G401 (cell line): ENCODE measurements at regions of chr16 and their contacts with region 1.

Region 1: GRCh38 chr16:15996432-15997109 is 47.2 kb downstream of the ABCC1 start:
- DNase-seq: no peak

Region 2: DNA sequence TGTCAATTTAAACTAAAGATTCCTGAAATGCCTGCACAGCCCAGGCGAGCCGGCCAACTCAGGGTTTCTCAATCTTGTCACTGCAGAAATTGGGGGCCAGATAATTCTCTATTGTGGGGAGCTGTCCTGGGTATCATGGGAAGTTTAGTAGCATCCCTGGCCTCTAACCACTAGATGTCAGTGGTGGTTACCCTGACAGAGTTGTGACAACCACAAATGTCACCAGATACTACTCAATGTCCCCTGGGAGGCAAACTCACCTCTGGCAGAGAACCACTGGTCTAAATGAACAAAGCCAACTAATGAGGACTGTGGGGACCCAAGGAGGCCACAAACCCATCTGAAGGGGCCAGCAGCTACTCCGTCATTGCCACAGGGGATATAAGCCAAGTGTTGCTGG is 230.7 kb before region 1 on chr16:
- in situ Hi-C with region 1: no loop called
- DNase-seq: peak; percentile 28

Region 3: GRCh38 chr16:15777533-15778203 is 218.9 kb before region 1 on chr16:
- in situ Hi-C with region 1: no loop called
- DNase-seq: peak; percentile 17

Region 4: DNA sequence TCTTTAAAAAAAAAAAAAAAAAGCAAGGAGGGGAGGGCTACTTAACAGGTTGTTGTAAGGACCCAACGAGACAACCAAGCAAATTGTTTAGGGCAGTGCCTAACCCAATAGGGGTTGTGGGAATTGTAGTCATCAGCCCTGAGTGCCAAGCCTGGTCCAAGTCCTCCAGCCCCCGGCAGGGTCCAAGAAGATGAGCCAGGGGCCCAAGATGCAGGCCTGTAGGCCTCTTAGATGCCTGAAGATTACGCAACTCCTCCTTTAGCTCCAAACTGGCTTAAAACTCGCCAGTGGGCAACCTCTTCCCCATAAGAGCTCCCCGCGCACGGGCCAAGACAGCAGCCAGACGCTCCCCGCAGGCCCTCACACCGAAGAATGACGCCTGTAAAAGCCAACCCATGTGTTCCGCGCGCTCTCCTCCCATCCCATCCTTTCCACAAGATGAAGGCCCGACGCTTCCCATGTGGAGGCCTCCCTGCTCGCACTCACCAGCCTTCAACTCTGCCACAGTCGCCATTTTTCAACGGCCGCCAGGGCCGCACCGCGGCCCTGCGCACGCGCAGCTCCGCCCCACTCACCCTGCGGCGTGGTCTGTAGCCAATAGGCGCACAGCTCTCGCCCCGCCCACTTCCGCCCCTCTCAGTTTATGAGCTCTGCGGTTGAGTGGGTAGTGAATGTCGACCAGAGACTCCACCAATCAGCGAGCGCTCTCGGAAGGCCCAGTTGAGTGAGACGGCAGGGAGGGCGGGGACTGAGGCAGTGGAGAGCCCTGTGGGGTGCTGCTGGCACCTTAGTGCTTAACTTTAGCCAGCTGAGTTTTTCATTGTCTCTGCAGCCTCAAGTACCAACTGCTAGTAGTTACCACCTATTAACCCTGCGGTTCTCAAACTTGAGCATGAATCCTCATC is 108.2 kb before region 1 on chr16 and contains the start of gene CEP20:
- in situ Hi-C with region 1: loop called (anchors 25 kb)
- DNase-seq: peak; percentile 100
- total RNA-seq, gene CEP20: 53.8 and 85.1 TPM in 2 replicates

Region 5: GRCh38 chr16:16042076-16042475 is 45.5 kb after region 1 on chr16:
- in situ Hi-C with region 1: no loop called
- DNase-seq: peak; percentile 30